Heart right ventricle (tissue), 16 donors: ENCODE measurements at regions of chr19 and their contacts with region 1.

Region 1: GRCh38 chr19:3665681-3666544 is 34.4 kb downstream of the PIP5K1C start:
- DNase-seq: peak; percentile 67 to 80
- ATAC-seq: peak; percentile 26 to 43 (median 30)
- H3K4me3 ChIP-seq: no peak overlapping the region
- H3K27ac ChIP-seq: peak overlapping the region in 3 of 10 donors; percentile 4 to 39 (median 11)
- H3K4me1 ChIP-seq: peaks cover 17 to 57% (median 42%) of the 10 kb centered on the region in 9 donors
- H3K27me3 ChIP-seq: peaks cover 0 to 1% (median 0%) of the 10 kb centered on the region in 7 donors
- CTCF ChIP-seq: peak; percentile 87 to 97 (median 95)

Region 2: DNA sequence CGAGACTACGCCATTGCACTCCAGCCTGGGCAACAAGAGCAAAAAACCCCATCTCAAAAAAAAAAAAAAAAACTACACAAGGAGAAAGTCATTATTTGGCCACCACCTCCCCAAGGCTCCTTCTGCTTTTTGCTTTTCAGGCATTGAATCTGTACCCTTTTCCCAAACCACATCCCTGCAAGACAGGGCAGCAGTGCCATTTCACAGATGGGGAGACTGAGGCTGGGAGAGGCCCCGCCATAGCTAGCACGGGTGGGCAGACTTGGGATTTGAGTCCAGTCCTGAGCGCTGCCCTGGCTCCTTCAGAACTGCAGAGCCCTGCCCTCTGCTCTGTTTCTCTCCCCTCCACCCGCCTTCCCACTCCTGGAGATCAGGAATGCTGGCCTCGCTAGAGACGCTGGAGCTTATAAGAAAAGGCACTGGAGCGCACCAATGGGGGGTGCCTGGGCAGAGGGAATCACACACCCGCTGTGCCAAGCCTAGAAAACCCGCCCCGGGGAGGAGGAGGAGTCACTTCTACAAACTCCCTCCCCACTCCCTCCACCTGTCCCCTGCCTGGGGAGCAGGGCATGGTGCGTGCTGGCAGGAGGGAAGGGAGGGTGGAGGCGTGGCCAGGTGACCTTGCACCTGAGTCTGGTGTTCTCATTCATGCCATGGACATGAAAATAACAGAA is 59.9 kb after region 1 on chr19:
- intact Hi-C with region 1: no loop called
- DNase-seq: no peak
- ATAC-seq: no peak
- H3K4me3 ChIP-seq: no peak overlapping the region
- H3K27ac ChIP-seq: no peak overlapping the region
- H3K4me1 ChIP-seq: peaks cover 0 to 17% (median 9%) of the 10 kb centered on the region in 9 donors
- H3K27me3 ChIP-seq: peaks cover 12 to 55% (median 39%) of the 10 kb centered on the region in 7 donors
- CTCF ChIP-seq: no peak

Region 3: DNA sequence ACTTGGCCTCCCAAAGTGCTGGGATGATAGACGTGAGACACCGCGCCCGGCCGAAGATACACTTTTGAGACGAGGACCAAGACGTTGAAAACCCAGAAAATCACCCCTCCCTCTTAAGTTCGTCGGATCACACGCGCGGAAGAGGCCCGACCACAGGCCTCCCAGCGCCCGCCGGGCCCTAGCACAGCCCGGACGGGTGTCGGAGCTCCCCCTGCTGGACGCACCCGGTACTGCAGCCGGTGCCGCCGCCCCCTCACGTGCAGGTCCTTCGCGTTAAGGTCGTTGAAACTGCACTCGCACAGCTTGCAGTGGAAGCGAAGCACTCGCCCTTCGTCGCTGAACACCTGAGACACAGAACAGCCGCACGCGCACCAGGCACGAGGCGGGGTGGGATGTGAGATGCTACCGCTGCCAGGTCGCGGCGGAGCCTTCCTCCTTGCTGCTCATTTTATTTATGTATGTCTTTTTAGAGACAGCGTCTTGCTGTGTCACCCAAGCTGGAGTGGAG is 156.0 kb after region 1 on chr19:
- intact Hi-C with region 1: loop called in 2 of 10 experiments (anchors 10 kb)
- DNase-seq: peak; percentile 38 to 76
- ATAC-seq: peak; percentile 68 to 85 (median 78)
- H3K4me3 ChIP-seq: no peak overlapping the region
- H3K27ac ChIP-seq: no peak overlapping the region
- H3K4me1 ChIP-seq: peaks cover 0 to 17% (median 5%) of the 10 kb centered on the region in 9 donors
- H3K27me3 ChIP-seq: peaks cover 0 to 14% (median 0%) of the 10 kb centered on the region in 7 donors
- CTCF ChIP-seq: peak; percentile 97 to 100 (median 99)

Region 4: GRCh38 chr19:4208385-4209094 is 542.6 kb after region 1 on chr19:
- intact Hi-C with region 1: loop called in 3 of 10 experiments (anchors 10 kb)
- DNase-seq: no peak
- ATAC-seq: no peak
- H3K4me3 ChIP-seq: no peak overlapping the region
- H3K27ac ChIP-seq: no peak overlapping the region
- H3K4me1 ChIP-seq: peaks cover 0 to 8% (median 3%) of the 10 kb centered on the region in 9 donors
- H3K27me3 ChIP-seq: peaks cover 0 to 18% (median 0%) of the 10 kb centered on the region in 7 donors
- CTCF ChIP-seq: peak in 6 of 9 donors; percentile 15 to 40 (median 20)